ENCODE measurements at regions of chr19 and their contacts with region 1.

Region 1: DNA sequence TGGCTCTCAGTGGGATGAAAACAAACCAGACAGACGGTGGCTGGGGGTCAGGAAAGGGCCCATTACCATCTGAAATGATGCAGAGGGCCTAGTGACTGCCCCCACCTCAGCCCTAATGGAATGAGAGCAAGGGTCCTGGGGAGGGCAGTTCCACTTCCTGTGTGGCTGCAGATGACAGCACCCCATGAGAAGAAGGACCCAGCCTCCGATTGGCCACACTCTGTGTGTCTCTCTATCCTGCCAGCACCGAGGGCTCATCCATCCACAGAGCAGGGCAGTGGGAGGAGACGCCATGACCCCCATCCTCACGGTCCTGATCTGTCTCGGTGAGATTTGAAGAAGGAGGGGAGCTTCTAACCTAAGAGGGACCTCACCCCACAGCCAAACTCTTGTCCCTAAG is 498 bp downstream of the LILRB1 start:
- DNase-seq: no peak
- ATAC-seq: no peak
- H3K4me3 ChIP-seq: no peak overlapping the region
- H3K27ac ChIP-seq: no peak overlapping the region
- H3K4me1 ChIP-seq: no peaks in the 10 kb centered on the region
- H3K27me3 ChIP-seq: peaks cover 3 to 36% of the 10 kb centered on the region in 2 experiments; a peak in 3 of 5 replicates
- CTCF ChIP-seq: no peak
- EP300 ChIP-seq: no peak
- POLR2A ChIP-seq: no peak
- RAD21 ChIP-seq: no peak

Region 2: DNA sequence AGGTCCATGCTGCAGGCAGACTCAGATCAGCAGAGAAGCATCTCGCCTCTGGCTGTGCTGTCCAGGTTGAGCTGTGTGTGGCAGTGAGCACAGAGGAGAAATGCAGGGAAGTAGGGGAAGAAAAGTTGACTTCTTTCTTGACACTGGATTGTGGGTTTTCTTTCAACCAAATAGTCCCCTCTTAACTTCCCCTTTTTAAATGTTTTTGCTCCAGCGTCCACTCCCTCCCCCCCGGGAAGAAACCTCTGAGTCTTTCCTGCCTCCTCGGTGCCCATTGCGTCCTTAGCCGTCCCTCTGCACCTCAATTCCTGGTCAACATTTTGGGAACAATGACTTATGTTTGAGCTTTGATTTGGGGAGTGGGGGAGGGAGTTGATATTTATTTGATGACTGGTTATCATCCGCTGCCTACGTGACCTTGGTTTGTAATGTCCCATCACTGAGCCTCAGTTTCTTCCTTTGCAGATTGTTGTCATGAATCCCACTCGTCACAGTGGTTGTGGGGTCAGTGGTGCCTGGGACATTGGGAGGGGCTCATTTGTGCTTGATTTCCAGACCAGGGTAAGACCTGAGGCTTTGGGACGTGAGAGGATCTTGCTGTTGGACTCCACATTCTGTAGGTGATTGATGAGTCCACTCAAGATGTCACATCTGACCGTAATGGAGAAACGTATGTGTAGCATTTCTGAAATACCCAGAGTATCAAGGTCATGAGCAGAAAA is 349.6 kb before region 1 on chr19 and contains the start of gene LILRB2:
- CTCF ChIA-PET with region 1: no interaction called
- POLR2A ChIA-PET with region 1: no interaction called
- in situ Hi-C with region 1: loop called (anchors 5 kb)
- intact Hi-C with region 1: no loop called
- DNase-seq: no peak
- ATAC-seq: no peak
- H3K4me3 ChIP-seq: no peak within 1 kb of the TSS
- H3K27ac ChIP-seq: no peak within 1 kb of the TSS
- H3K4me1 ChIP-seq: no peaks in the 10 kb centered on the region
- H3K27me3 ChIP-seq: peaks cover 8 to 50% of the 10 kb centered on the region in 2 experiments
- CTCF ChIP-seq: no peak
- EP300 ChIP-seq: no peak
- POLR2A ChIP-seq: no peak
- RAD21 ChIP-seq: no peak
- polyA plus RNA-seq, gene LILRB2: not detected

Measured in K562 (cell line).